AG04449 (cell line): ENCODE measurements at regions of chr16 and their contacts with region 1.

Region 1: GRCh38 chr16:85717393-85718121 is 28.8 kb upstream of the GINS2 start:
- DNase-seq: no peak
- H3K4me3 ChIP-seq: no peak overlapping the region
- CTCF ChIP-seq: peak; percentile 48

Region 2: GRCh38 chr16:85253084-85253941 is 464.2 kb before region 1 on chr16:
- CTCF ChIA-PET with region 1: interaction called, 17 read pairs
- POLR2A ChIA-PET with region 1: no interaction called
- DNase-seq: no peak
- H3K4me3 ChIP-seq: no peak overlapping the region
- CTCF ChIP-seq: peak; percentile 97

Region 3: DNA sequence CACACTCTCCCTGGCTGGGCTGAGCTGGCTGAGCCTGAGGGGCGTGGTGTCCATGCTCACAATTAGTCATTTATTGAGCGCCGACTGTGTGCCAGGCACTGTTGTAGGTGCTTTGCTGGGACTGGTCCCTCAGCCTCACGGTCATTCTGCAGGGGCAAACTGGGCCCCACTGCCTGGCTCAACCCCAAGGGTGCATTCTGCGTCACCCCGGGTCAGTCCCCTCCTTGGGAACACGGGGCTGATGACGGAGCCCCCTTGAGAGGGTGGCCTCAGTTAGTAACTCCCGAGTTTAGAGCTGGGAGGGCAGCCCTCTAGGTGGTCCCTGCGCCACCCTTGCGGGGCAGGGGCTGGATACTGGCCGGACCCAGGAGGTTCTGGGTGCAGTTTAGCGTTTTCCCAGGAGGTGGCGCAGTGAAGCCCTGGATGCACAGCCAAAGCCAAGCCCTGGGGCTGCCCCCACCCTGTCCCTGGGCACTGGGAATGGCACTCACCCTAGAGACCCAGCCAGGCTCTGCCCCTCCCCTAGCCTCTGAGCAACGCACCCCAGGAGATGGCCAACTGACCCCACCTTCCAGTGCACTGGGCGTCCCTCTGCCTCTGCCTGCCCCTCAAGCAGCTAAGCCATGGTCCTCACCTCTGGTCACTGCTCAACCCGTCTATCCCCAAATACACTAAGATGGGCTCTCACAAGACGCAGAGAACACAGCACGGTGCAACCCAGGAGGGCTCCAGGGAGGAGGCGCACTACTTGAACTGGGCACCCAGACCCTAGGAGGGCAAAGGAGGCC is 347.6 kb before region 1 on chr16:
- CTCF ChIA-PET with region 1: interaction called, 16 read pairs
- POLR2A ChIA-PET with region 1: no interaction called
- DNase-seq: no peak
- H3K4me3 ChIP-seq: no peak overlapping the region
- CTCF ChIP-seq: peak; percentile 86

Region 4: DNA sequence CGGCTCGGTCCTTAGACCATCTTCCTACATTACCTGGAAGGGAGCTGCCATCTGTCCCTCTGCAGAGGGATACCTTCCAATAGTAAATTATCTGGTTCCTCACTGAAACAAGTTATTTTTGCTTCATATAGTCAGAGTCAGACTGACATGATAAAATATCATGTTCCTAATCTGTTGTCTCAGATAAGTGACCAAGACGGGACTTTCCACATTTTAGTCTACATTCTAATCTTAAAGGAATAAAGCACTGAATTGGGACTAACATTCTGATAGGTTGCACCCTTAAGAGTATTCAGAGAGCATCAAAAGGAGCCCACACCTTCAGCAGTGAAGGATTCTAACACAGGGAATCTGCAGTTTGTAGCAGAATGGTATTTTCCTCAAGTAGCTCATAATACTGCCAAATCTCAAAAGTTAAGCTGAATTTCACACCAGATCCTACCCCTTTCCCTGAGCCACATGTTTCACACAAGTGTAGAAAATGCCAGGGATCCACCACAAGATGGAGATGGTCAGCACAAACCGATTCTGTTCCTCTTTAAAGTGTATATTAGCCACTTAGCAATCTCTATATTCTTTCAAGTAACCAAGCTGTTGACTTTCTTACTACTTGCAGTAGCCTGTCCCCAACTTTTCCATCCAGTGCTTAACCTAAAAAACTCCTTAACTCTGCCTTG is 42.2 kb before region 1 on chr16:
- CTCF ChIA-PET with region 1: interaction called, 220 read pairs
- POLR2A ChIA-PET with region 1: no interaction called
- DNase-seq: no peak
- H3K4me3 ChIP-seq: no peak overlapping the region
- CTCF ChIP-seq: peak; percentile 58

Region 5: DNA sequence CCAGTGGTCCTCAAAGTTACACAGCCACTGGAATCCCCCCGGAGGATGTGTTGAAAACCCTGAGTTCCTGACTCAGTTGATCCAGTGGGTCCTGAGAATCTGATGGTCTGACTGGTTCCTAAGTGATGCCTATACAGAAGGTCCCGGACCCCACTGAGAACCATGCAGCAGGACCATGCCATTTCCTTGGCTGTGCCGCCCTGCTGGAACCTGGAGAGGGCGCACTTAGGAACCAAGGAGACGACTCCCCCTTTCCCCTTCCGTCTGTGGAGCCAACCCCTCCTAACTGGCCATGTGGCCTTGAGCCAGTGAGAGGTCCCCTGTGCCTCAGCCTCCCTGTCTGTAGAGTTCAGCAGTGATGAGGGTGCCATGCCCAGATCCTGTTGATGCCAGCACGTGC is 11.3 kb after region 1 on chr16:
- CTCF ChIA-PET with region 1: interaction called, 32 read pairs
- POLR2A ChIA-PET with region 1: no interaction called
- DNase-seq: no peak
- H3K4me3 ChIP-seq: no peak overlapping the region
- CTCF ChIP-seq: no peak

Region 6: DNA sequence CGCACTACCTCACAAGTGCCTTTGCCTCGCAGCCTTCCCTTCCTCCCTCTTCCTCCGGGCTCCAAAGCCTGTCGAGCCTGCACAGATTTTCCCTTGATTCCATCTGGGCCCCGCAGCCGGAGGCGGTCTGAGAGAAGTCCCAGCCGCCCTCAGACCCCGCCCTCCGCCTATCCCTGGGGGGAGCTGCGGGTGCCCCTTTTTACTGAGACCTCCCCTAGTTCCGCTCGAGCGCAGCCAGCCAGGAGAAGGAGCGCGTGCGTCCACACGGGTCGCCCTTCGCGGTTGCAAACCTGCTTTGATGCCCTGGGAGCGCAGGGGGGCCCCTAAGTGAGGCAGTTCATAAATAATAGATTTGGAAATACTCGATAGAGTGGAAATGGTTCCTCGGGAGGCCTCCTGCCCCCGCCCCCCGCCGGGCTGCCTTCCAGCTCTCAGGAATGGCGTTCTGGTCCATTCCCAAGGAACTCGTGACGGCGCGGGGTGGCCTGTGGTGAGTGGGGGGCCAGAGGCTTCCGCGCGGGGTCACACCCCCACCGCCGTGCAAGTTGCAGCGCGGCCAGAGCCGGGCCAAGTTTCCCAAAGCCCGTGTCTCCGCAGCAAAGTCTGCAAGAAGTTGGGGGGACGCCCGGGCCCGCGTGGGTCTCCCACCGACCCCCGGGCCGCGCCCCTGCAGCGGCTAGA is 32.7 kb after region 1 on chr16:
- CTCF ChIA-PET with region 1: interaction called, 11 read pairs
- POLR2A ChIA-PET with region 1: no interaction called
- DNase-seq: no peak
- H3K4me3 ChIP-seq: peak overlapping the region; percentile 61
- CTCF ChIP-seq: peak; percentile 3